Left cardiac atrium (tissue), 4 donors: ENCODE measurements at regions of chr3 and their contacts with region 1.

Region 1: GRCh38 chr3:139982404-139982803 is 47.4 kb downstream of the CLSTN2 start:
- DNase-seq: no peak
- ATAC-seq: no peak

Region 2: DNA sequence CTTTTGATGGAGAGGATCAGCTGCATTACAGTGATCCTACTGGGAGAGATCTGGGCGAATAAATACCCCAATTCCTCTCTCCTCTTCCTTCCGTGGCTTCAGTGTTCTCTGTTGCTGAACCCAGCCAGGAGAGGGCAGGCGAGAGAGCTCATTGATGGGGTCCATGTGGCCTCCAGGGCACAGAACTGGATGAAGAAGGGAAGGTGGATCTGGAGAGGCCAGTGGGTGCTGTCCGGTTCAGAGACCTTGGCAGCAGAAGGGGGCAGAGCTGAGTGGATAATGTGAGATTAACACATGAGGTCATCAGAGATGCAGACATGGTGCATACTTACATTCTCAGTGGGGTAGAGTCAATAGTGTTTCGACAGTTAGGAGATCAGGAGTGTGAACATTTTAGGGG is 146.2 kb after region 1 on chr3:
- intact Hi-C with region 1: no loop called
- DNase-seq: no peak
- ATAC-seq: peak in 1 of 2 donors; percentile 60

Region 3: GRCh38 chr3:140296796-140297352 is 314.5 kb after region 1 on chr3:
- intact Hi-C with region 1: no loop called
- DNase-seq: no peak
- ATAC-seq: peak in 1 of 2 donors; percentile 20

Region 4: DNA sequence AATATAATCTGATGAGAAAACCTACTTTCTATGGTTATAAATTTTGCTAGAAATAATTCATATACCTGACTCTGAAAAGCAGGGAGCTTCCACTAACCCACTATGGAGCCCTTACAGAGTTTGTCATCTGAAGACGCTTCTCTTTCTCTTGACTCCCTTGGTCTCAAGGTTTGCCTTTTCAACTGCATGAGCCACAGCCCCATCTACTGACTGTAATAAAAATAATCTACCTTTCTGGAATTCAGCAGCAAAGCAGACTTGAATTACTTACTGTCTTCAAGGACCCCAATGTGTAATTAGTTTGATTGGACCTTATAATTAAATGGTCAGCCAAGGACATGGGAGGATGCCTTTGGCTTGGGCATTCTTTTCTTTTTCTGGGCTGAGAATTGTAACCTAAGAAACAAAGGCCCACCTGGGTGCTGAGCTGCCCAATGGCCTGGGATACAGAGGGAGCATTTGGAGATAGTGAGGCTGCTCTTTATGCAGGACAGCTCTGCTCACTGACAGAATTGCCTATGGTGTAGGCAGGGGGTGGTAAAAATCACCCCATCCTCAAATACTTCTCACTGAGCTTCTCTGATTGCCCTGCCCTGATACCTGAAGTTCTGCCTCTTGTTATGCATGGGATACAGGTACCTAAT is 516.8 kb after region 1 on chr3:
- intact Hi-C with region 1: loop called in 1 of 2 experiments (anchors 2 kb)
- DNase-seq: no peak
- ATAC-seq: peak in 1 of 2 donors; percentile 44